Activated T-helper 2 cell treated with anti-CD3 and anti-CD28 coated beads, Interferon-gamma antibody, Interleukin-2, Interleukin-4, amounts not matched to agents 10 μg/mL and 5 μg/mL and 100 μg/mL, durations not matched to agents 14 hours and 24 hours and 36 hours (primary cell): ENCODE measurements at regions of chr19 and their contacts with region 1.

Region 1: DNA sequence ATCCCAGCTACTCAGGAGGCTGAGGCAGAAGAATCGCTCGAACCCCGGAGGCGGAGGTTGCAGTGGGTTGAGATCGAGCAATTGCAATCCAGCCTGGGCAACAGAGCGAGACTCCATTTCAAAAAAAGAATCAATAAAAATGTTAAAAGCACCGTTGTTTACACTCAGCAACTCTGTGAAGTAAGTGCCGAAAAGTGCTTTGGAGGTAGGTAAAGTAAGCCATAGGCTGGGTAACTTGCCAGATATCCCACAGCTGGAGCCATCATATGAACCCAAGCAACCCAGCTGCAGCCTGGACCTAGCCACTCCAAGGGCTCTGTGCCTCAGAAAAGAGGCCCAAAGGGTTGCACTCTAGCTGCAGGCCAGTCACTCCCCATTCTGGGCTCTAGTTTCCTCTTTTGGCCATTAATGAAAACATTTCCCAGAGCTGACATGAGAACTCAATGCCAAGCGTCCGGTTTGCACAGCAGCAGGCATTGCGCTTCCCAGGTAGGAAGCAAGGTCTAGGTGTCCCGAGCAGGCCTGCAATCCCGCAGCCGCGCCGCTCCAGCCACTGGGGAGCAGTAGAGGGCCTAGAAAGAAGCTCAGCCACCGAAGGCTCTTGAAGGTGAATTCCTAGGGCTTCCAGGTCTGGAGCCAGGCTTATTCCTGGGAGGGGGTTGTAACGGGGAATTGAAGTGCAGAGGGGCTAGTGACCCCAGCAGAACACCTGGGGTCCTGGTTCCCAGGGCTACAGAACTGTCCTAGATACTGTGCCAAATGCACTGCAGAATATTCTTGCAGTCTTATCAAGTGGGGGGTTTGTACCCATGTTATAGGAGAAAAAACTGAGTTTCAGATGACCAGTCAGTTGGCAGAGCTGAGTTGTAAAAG is 4.1 kb upstream of the CD79A start:
- DNase-seq: peak; percentile 56
- H3K4me3 Mint-ChIP-seq: peak overlapping the region; percentile 21
- H3K27ac Mint-ChIP-seq: peak overlapping the region; percentile 72
- H3K4me1 Mint-ChIP-seq: peaks cover 68% of the 10 kb centered on the region
- H3K27me3 Mint-ChIP-seq: no peaks in the 10 kb centered on the region

Region 2: GRCh38 chr19:41883821-41884733 is 11.1 kb after region 1 on chr19:
- intact Hi-C with region 1: loop called (anchors 1 kb)
- DNase-seq: peak; percentile 90
- H3K4me3 Mint-ChIP-seq: peak overlapping the region; percentile 81
- H3K27ac Mint-ChIP-seq: peak overlapping the region; percentile 94
- H3K4me1 Mint-ChIP-seq: peaks cover 45% of the 10 kb centered on the region
- H3K27me3 Mint-ChIP-seq: no peaks in the 10 kb centered on the region

Region 3: GRCh38 chr19:41920882-41921576 is 48.0 kb after region 1 on chr19:
- intact Hi-C with region 1: no loop called
- DNase-seq: no peak
- H3K4me3 Mint-ChIP-seq: no peak overlapping the region
- H3K27ac Mint-ChIP-seq: no peak overlapping the region
- H3K4me1 Mint-ChIP-seq: peaks cover 12% of the 10 kb centered on the region
- H3K27me3 Mint-ChIP-seq: peaks cover 12% of the 10 kb centered on the region

Region 4: GRCh38 chr19:41934849-41935374 is 61.9 kb after region 1 on chr19:
- intact Hi-C with region 1: loop called (anchors 2 kb)
- DNase-seq: peak; percentile 59
- H3K4me3 Mint-ChIP-seq: peak overlapping the region; percentile 31
- H3K27ac Mint-ChIP-seq: peak overlapping the region; percentile 75
- H3K4me1 Mint-ChIP-seq: peaks cover 38% of the 10 kb centered on the region
- H3K27me3 Mint-ChIP-seq: peaks cover 20% of the 10 kb centered on the region

Region 5: DNA sequence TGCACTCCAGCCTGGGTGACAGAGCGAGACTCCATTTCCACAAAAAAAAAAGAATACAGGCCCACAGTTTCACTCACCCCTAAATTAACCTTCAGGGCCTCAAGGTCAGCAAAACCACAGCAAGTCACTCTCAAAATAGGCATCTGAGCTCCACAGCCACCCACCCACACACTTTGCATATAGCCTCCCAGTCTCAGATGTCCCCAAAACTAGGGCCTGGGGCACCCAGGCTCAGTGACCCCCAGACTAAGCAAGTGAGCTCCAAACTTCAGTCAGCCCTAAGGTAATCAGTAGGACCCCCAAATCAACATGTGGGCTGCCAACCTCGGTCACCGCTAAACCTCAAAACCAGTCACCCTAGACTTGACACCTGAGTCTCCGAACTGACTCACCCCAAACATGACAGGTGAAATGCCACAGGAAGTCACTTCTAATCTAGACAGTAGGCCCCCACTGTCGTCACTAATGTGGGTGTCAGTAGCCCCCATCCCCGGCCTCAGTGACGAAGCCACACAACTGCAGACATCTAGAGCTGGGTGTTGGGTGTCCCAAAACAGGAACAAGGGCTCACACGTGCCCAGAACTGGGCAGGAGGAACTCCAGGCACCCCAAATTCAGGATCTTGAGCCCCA is 72.2 kb after region 1 on chr19:
- intact Hi-C with region 1: loop called (anchors 2 kb)
- DNase-seq: peak; percentile 67
- H3K4me3 Mint-ChIP-seq: peak overlapping the region; percentile 13
- H3K27ac Mint-ChIP-seq: peak overlapping the region; percentile 97
- H3K4me1 Mint-ChIP-seq: peaks cover 44% of the 10 kb centered on the region
- H3K27me3 Mint-ChIP-seq: peaks cover 6% of the 10 kb centered on the region

Region 6: DNA sequence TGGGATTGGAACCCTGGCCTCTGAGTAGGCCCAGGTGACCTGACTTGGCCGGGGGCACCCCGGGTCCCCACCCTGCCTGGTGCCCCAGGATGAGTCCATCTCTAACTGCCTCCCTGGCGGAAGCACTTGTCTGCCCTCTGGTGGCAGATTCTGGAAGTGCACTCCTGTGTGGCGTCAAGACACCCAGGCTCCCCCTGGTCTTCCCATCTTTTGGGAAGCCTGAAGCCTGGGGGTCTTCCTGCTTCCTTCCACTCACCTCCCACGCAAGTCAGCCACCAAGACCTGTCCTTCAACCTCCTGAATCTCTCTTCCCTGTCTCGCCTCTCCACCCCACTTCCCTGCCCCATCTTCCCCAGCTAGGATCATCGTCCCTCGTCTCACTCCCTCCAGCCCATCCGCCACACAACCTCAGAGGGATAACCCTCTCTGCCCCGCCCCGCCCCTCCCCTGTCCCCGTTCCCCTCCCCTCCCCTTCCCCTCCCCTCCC is 78.7 kb after region 1 on chr19:
- intact Hi-C with region 1: loop called (anchors 1 kb)
- DNase-seq: peak; percentile 75
- H3K4me3 Mint-ChIP-seq: no peak overlapping the region
- H3K27ac Mint-ChIP-seq: peak overlapping the region; percentile 14
- H3K4me1 Mint-ChIP-seq: peaks cover 18% of the 10 kb centered on the region
- H3K27me3 Mint-ChIP-seq: no peaks in the 10 kb centered on the region